Activated CD4-positive, alpha-beta memory T cell treated with anti-CD3 and anti-CD28 coated beads, Interleukin-2, amount 10 ng/mL, durations not matched to agents 7 days and 5 days (primary cell): ENCODE measurements at regions of chr19 and their contacts with region 1.

Region 1: GRCh38 chr19:10952809-10953208 is 8.0 kb upstream of the SMARCA4 start:
- DNase-seq: no peak
- H3K4me3 Mint-ChIP-seq: no peak overlapping the region
- H3K27ac Mint-ChIP-seq: no peak overlapping the region
- H3K4me1 Mint-ChIP-seq: peaks cover 2% of the 10 kb centered on the region
- H3K27me3 Mint-ChIP-seq: no peaks in the 10 kb centered on the region

Region 2: GRCh38 chr19:10936661-10937084 is 16.1 kb before region 1 on chr19:
- CTCF ChIA-PET with region 1: interaction called, 12 read pairs
- POLR2A ChIA-PET with region 1: no interaction called
- DNase-seq: peak; percentile 32
- H3K4me3 Mint-ChIP-seq: no peak overlapping the region
- H3K27ac Mint-ChIP-seq: no peak overlapping the region
- H3K4me1 Mint-ChIP-seq: peaks cover 12% of the 10 kb centered on the region
- H3K27me3 Mint-ChIP-seq: no peaks in the 10 kb centered on the region